Esophagus squamous epithelium (tissue), 5 donors: ENCODE measurements at regions of chr3 and their contacts with region 1.

Region 1: DNA sequence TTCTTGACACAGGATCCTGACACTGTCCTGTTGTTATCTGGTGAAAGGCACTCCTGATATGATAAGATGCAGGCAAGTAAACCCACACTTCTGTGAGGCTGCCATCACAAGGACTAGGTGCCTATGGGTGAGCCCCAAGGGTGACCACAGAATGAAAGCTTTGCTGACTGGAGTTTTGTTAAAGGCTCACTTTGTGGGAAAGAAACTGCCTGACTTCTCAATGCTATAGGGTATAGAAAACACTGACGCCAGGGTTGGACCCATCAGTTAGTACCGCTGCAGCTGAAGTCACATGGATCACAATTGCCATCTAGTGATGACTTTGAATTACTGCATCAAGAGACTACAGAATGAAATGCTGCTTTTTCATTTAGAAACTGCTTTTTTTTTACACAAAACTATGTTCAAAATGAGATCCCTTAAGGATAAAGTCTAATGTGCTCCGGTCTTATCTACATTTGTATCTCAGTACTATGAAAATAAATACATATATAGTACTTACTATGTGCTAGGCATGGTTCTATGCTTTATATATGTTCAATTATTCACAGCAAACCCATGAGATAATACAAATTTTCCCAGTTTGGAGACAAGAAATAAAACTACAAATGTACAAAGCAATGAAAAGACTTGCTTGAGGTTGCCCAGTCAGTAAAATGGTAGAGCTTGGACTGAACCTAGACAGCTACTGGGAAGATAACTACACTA is 64.2 kb upstream of the CMSS1 start:
- DNase-seq: no peak
- H3K4me3 ChIP-seq: no peak overlapping the region
- H3K27ac ChIP-seq: no peak overlapping the region
- H3K4me1 ChIP-seq: peaks cover 0 to 3% (median 0%) of the 10 kb centered on the region in 3 donors
- H3K27me3 ChIP-seq: no peaks in the 10 kb centered on the region
- CTCF ChIP-seq: peak; percentile 40 to 69 (median 48)
- POLR2A ChIP-seq: no peak

Region 2: GRCh38 chr3:99023590-99024192 is 729.7 kb before region 1 on chr3:
- intact Hi-C with region 1: loop called (anchors 10 kb)
- DNase-seq: no peak
- H3K4me3 ChIP-seq: no peak overlapping the region
- H3K27ac ChIP-seq: no peak overlapping the region
- H3K4me1 ChIP-seq: no peaks in the 10 kb centered on the region
- H3K27me3 ChIP-seq: no peaks in the 10 kb centered on the region
- CTCF ChIP-seq: peak in 5 of 6 experiments; percentile 47 to 74 (median 62)
- POLR2A ChIP-seq: no peak

Region 3: DNA sequence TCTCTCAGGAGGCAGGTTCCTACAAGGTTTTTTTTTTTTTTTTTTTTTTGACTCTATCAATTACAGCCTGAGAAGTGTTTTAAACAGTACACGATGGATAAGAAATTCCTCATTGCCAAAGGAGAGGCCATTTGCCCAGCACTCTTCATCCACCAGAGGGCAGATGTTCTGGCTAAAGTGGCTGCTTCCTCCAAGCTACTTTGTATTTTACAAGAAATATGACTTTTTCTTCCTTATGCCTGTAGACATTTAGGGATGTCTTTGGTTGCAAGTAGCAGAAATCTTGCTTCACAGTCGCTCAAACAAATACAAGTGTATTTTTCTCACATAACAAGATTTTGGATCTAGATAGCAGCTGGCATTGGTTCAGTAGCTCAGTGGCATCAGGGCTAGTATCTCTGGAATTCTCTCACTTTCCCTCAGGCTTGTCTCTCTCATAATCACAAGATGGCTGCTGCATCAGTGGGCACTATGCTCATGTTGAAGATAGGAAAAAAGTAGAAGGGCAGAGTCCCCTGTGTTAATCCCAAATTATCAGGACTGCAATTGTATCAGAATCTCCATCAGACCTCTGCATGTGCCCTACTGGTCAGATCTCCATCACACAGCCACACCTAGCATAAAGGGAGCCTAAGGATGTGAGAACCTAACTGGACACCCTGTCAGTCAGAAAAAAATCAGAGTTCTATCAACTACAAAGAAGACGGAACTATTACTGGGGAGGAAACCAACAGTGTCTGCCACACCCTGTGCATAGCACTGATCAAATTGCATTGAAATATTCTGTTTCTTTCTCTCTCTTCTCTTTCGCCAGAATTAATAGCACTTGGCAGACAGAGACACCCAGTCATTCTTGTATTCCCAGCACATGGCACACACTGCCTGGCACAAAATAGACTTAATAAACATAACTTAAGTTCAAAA is 253.9 kb before region 1 on chr3:
- intact Hi-C with region 1: loop called (anchors 10 kb)
- DNase-seq: no peak
- H3K4me3 ChIP-seq: no peak overlapping the region
- H3K27ac ChIP-seq: no peak overlapping the region
- H3K4me1 ChIP-seq: peaks cover 0 to 23% (median 7%) of the 10 kb centered on the region in 3 donors
- H3K27me3 ChIP-seq: no peaks in the 10 kb centered on the region
- CTCF ChIP-seq: peak in 5 of 6 experiments; percentile 41 to 67 (median 61)
- POLR2A ChIP-seq: no peak